PC-3 (cell line): ENCODE measurements at regions of chr10 and their contacts with region 1.

Region 1: DNA sequence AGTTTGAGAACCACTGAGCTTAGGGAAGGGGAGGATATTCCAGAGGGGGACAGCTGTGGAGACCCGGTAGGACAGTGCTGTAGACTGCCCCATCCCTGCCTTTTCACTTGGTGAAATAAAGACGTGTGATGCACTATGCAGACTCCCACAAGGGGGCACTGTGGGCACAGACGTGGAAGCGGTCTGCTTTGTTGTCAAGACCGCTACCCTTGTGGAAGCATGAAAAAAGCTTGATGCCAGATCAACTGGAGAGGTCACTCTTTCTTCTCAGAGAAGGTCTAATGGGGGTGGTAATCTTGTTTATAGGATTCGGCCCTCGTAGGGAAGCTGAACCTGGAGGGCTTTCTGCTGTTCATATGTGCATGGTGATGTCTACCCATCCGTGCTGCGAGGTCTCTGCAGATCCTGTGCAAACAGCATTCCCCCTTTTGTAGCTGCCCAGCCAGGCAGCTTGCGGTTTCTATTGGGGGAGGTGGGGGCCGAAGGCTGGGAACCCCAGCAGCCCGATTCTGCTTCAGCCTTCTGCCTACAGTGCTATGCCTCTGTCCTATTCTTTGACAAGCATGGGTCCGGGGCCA is 13.7 kb downstream of the RPS24 start:
- DNase-seq: peak; percentile 100
- ATAC-seq: peak; percentile 75
- H3K4me3 ChIP-seq: no peak overlapping the region
- H3K27ac ChIP-seq: no peak overlapping the region
- H3K4me1 ChIP-seq: no peaks in the 10 kb centered on the region
- H3K27me3 ChIP-seq: no peaks in the 10 kb centered on the region
- CTCF ChIP-seq: peak; percentile 100

Region 2: DNA sequence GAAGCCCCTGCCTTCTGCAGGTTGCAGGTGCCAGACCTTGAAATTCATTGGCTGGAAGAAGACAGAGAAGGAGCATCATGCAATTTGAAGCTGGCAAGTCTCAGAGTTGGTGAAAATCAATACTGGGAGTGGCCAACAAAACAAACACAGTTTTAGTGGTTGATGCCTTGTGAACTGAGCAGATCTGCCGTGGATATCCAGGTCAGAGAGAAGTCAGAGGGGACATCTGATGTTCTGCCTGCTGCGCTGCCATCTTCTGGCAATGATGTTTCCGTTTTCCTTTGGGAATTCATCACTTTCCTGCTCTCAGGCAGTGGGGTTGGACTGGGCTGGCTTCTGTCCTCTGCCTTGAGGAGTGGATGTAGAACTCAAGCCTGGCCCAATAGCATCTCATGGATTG is 118.2 kb after region 1 on chr10:
- CTCF ChIA-PET with region 1: interaction called, 5 read pairs
- POLR2A ChIA-PET with region 1: interaction called, 4 read pairs
- intact Hi-C with region 1: loop called (anchors 1 kb)
- DNase-seq: peak; percentile 83
- ATAC-seq: peak; percentile 81
- H3K4me3 ChIP-seq: no peak overlapping the region
- H3K27ac ChIP-seq: no peak overlapping the region
- H3K4me1 ChIP-seq: no peaks in the 10 kb centered on the region; the same call in 1 of the 2 replicates
- H3K27me3 ChIP-seq: peaks cover 60% of the 10 kb centered on the region
- CTCF ChIP-seq: peak; percentile 95

Region 3: DNA sequence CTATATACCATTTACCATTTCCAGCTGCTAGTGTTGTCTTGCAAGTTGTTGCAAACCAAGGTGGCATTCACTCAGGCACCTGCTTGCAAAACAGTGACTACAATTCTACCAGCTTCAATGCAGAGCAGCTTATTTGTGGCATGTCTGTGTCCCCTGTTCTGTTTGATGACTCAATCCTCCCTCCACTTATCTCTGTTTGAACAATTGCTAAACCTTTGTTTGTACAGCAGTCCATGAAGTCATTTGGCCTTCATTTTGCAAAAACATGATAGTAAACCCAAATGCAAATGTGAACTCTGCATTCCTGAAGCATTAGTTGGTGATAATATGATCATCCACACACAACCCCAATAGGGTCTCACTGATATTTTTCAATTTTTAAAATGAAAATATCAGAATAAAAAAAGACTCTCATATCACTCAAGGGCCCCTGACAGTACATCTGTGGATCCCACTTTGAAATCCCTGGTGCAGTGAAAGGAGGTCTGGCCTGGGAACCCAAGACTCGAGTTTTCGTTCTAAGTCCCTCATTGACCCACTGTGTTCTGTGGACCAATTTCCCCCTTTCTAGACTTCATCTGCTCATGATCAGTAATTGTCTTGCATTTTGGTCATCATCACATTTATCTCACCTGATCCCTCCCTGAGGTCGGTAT is 411.7 kb after region 1 on chr10:
- CTCF ChIA-PET with region 1: no interaction called
- POLR2A ChIA-PET with region 1: no interaction called
- intact Hi-C with region 1: loop called (anchors 5 kb)
- DNase-seq: peak; percentile 100
- ATAC-seq: peak; percentile 91
- H3K4me3 ChIP-seq: peak overlapping the region; percentile 6; the same call in 1 of the 2 replicates
- H3K27ac ChIP-seq: peak overlapping the region; percentile 85
- H3K4me1 ChIP-seq: peaks cover 57% of the 10 kb centered on the region
- H3K27me3 ChIP-seq: no peaks in the 10 kb centered on the region
- CTCF ChIP-seq: no peak

Region 4: DNA sequence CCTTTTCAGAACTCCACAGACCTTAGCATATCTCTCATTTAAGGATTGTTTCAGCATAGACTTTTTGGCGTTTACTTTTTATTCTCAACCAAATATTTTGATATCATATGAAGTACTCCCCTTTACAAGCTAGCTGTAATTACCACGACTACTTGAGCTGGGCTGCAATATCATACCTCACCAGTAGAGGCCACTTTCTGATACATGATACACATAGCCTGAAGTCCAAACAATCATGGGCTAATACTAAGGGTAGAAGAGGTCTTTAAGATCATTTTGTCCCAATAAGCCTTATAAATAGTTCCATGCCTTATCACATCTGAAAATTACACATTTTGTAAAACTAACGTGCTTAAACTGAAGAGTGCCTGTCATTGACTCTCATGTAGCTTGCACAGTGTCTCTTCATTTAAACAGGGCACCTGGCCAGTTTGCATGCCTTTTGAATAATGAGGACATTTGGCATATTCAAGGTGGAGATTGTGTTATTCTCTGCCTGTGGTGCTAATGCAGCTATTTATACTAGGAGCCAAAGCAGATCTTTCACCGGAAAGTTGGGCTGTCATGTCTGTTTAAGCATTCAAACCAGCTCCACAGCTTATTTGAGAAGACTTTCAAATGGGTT is 617.6 kb after region 1 on chr10:
- CTCF ChIA-PET with region 1: interaction called, 11 read pairs
- POLR2A ChIA-PET with region 1: no interaction called
- intact Hi-C with region 1: no loop called
- DNase-seq: peak; percentile 98
- ATAC-seq: peak; percentile 86
- H3K4me3 ChIP-seq: no peak overlapping the region
- H3K27ac ChIP-seq: no peak overlapping the region
- H3K4me1 ChIP-seq: no peaks in the 10 kb centered on the region
- H3K27me3 ChIP-seq: peaks cover 34% of the 10 kb centered on the region
- CTCF ChIP-seq: peak; percentile 100

Region 5: GRCh38 chr10:78805176-78805575 is 757.8 kb after region 1 on chr10:
- CTCF ChIA-PET with region 1: interaction called, 3 read pairs
- POLR2A ChIA-PET with region 1: no interaction called
- intact Hi-C with region 1: loop called (anchors 10 kb)
- DNase-seq: peak; percentile 100
- ATAC-seq: peak; percentile 90
- H3K4me3 ChIP-seq: no peak overlapping the region
- H3K27ac ChIP-seq: peak overlapping the region; percentile 40
- H3K4me1 ChIP-seq: peaks cover 59% of the 10 kb centered on the region
- H3K27me3 ChIP-seq: no peaks in the 10 kb centered on the region
- CTCF ChIP-seq: no peak

Region 6: GRCh38 chr10:78925800-78926319 is 878.5 kb after region 1 on chr10:
- CTCF ChIA-PET with region 1: no interaction called
- POLR2A ChIA-PET with region 1: no interaction called
- intact Hi-C with region 1: no loop called
- DNase-seq: peak; percentile 100
- ATAC-seq: peak; percentile 53
- H3K4me3 ChIP-seq: no peak overlapping the region
- H3K27ac ChIP-seq: peak overlapping the region; percentile 65
- H3K4me1 ChIP-seq: peaks cover 51% of the 10 kb centered on the region
- H3K27me3 ChIP-seq: no peaks in the 10 kb centered on the region
- CTCF ChIP-seq: no peak